ENCODE measurements at regions of chr13 and their contacts with region 1.

Region 1: GRCh38 chr13:48975856-48976575 is at the start of gene FNDC3A:
- DNase-seq: no peak
- ATAC-seq: peak; percentile 82
- H3K4me3 ChIP-seq: peak within 1 kb of the TSS; percentile 80
- H3K27ac ChIP-seq: peak within 1 kb of the TSS; percentile 96
- H3K4me1 ChIP-seq: peaks cover 3% of the 10 kb centered on the region; the same call in 1 of the 2 replicates
- H3K27me3 ChIP-seq: no peaks in the 10 kb centered on the region
- CTCF ChIP-seq: peak in 1 of 3 experiments; percentile 14; a peak in 2 of 6 replicates
- EP300 ChIP-seq: no peak
- POLR2A ChIP-seq: peak; percentile 91
- RAD21 ChIP-seq: no peak
- polyA plus RNA-seq, gene FNDC3A: 6.3 to 8.4 TPM

Region 2: GRCh38 chr13:48380581-48380980 is 595.4 kb before region 1 on chr13:
- CTCF ChIA-PET with region 1: no interaction called
- POLR2A ChIA-PET with region 1: no interaction called
- RAD21 ChIA-PET with region 1: no interaction called
- SMC1A ChIA-PET with region 1: no interaction called
- in situ Hi-C with region 1: no loop called
- intact Hi-C with region 1: no loop called
- DNase-seq: no peak
- ATAC-seq: no peak
- H3K4me3 ChIP-seq: no peak overlapping the region
- H3K27ac ChIP-seq: no peak overlapping the region
- H3K4me1 ChIP-seq: no peaks in the 10 kb centered on the region
- H3K27me3 ChIP-seq: no peaks in the 10 kb centered on the region
- CTCF ChIP-seq: no peak
- EP300 ChIP-seq: no peak
- POLR2A ChIP-seq: no peak
- RAD21 ChIP-seq: no peak

Region 3: GRCh38 chr13:49082653-49083536 is 106.9 kb after region 1 on chr13:
- CTCF ChIA-PET with region 1: no interaction called
- POLR2A ChIA-PET with region 1: no interaction called
- RAD21 ChIA-PET with region 1: no interaction called
- SMC1A ChIA-PET with region 1: interaction called, 3 read pairs
- in situ Hi-C with region 1: no loop called
- intact Hi-C with region 1: loop called (anchors 5 kb)
- DNase-seq: peak; percentile 48
- ATAC-seq: peak; percentile 88
- H3K4me3 ChIP-seq: no peak overlapping the region
- H3K27ac ChIP-seq: peak overlapping the region; percentile 83
- H3K4me1 ChIP-seq: peaks cover 30% of the 10 kb centered on the region
- H3K27me3 ChIP-seq: no peaks in the 10 kb centered on the region
- CTCF ChIP-seq: no peak
- EP300 ChIP-seq: peak; percentile 77 to 80; a peak in 3 of 4 replicates
- POLR2A ChIP-seq: no peak
- RAD21 ChIP-seq: no peak

Region 4: GRCh38 chr13:49454388-49455006 is 478.5 kb after region 1 on chr13:
- CTCF ChIA-PET with region 1: no interaction called
- POLR2A ChIA-PET with region 1: no interaction called
- RAD21 ChIA-PET with region 1: no interaction called
- SMC1A ChIA-PET with region 1: no interaction called
- in situ Hi-C with region 1: loop called (anchors 10 kb)
- intact Hi-C with region 1: no loop called
- DNase-seq: no peak
- ATAC-seq: peak; percentile 97
- H3K4me3 ChIP-seq: no peak overlapping the region
- H3K27ac ChIP-seq: peak overlapping the region; percentile 13; the same call in 1 of the 2 replicates
- H3K4me1 ChIP-seq: peaks cover 14% of the 10 kb centered on the region; the same call in 1 of the 2 replicates
- H3K27me3 ChIP-seq: no peaks in the 10 kb centered on the region
- CTCF ChIP-seq: no peak
- EP300 ChIP-seq: peak; percentile 78 to 85
- POLR2A ChIP-seq: no peak
- RAD21 ChIP-seq: no peak